Calu3 (cell line): ENCODE measurements at regions of chr6 and their contacts with region 1.

Region 1: DNA sequence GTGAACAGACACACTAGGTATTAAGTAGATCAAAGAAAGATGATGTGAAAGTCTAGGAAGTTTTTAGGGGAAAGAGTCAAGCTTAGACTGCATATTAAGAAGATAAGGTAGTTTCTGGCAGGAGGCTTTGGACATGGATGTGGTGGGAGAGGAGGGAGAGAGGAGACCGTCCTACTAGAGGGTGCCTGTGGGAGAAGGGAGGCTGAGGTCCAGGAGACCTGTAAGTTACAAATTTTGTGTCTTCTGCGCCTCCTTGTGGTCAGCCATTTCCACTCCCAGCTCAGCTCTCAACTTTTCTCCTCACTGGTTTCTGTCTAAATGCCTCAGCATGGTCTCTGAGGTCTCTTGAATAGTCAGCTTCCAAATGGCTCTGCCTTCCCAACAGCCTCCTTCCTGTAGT is 193.5 kb downstream of the UNC5CL start:
- DNase-seq: peak; percentile 59
- H3K4me3 Mint-ChIP-seq: no peak overlapping the region
- H3K27ac Mint-ChIP-seq: no peak overlapping the region
- H3K4me1 Mint-ChIP-seq: no peaks in the 10 kb centered on the region
- H3K27me3 Mint-ChIP-seq: peaks cover 86% of the 10 kb centered on the region
- CTCF ChIP-seq: peak; percentile 90

Region 2: DNA sequence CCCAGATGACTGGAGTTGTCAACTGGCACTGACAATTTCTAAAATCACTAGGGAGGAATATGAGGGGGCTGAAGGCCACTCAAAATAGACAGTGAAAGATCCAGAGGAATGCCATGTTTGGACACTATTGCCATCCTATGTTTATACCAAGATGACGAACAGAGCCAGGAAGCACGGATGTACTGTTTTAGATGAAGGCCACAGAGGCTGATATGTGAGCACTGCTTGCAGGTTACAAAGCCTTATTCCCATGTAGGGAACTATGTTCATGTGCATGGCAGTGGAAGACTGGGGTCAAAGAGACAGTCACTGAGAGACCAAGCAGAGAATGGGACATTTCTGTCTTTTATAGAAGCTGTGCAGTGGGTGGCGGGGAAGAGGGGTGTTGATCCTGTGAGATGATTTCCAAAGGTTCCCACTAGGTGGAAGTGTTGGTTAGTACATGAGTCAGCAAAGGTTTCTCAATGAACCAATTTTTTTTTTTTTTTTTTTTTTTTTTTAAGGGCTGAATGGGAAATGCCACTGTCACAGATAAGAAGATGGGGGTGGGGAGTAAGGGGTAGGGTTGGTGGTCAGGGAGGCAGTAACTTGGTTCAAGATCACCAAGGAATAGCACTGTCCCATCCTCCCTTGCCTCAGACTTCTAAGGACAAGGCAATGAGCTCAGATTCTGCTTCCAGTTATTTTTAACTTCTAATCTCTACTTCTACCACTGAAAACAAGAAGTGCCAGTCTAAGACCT is 864.5 kb before region 1 on chr6:
- CTCF ChIA-PET with region 1: no interaction called
- intact Hi-C with region 1: loop called (anchors 5 kb)
- DNase-seq: peak; percentile 48
- H3K4me3 Mint-ChIP-seq: no peak overlapping the region
- H3K27ac Mint-ChIP-seq: no peak overlapping the region
- H3K4me1 Mint-ChIP-seq: no peaks in the 10 kb centered on the region
- H3K27me3 Mint-ChIP-seq: peaks cover 25% of the 10 kb centered on the region
- CTCF ChIP-seq: no peak